PC-3 (cell line): ENCODE measurements at regions of chr14 and their contacts with region 1.

Region 1: DNA sequence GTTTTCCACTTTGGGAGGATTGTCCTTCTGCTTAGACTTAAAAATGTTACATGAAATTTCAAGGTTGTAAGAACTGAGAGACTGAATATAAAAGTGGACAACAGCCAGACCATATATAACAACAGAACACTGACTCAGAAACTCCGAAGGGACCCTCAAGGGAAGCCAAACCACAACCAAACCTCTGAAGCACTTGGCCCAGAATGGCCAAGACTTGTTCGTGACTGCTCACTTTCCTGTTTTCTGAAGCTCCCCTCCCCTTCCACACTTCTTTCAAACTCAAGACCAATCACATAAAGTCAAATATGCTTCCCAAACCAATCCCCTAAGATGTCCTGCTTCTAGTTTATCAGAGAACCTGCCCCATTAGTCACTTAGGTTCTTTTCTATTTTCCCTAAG is 13.7 kb downstream of the OR6J1 start:
- DNase-seq: no peak
- ATAC-seq: no peak
- H3K4me3 ChIP-seq: no peak overlapping the region
- H3K27ac ChIP-seq: no peak overlapping the region
- H3K4me1 ChIP-seq: no peaks in the 10 kb centered on the region
- H3K27me3 ChIP-seq: no peaks in the 10 kb centered on the region
- CTCF ChIP-seq: no peak

Region 2: DNA sequence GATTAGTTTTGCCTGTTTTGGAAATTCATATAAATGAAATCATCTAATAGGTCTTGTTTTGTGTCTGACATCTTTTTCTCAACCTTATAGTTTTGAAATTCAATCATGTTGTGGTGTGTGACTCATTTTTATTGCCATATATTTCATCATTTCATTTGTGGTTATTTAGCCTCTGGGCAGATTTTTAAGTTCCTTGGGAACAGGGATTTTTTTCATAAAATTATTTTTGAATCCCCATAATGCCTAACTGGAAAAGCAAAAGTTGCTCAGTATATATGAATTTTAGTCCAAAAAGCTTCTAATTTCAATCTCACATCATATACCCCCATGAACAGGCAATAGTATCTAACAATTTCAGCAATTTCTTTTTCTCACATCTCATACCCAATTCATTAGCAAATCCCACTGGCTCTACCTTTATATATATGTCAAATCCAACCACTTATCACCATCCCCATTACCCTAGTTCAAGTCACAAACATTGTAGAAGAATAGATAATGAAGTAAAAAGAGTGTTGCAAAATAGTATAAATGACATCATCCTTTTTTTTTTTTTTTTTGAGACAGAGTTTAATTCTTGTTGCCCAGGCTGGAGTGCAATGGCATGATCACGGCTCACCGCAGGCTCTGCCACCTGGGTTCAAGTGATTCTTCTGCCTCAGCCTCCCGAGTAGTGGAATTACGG is 16.2 kb after region 1 on chr14:
- CTCF ChIA-PET with region 1: no interaction called
- POLR2A ChIA-PET with region 1: interaction called, 10 read pairs
- intact Hi-C with region 1: no loop called
- DNase-seq: peak; percentile 91
- ATAC-seq: no peak
- H3K4me3 ChIP-seq: no peak overlapping the region
- H3K27ac ChIP-seq: peak overlapping the region; percentile 73
- H3K4me1 ChIP-seq: peaks cover 55% of the 10 kb centered on the region
- H3K27me3 ChIP-seq: no peaks in the 10 kb centered on the region
- CTCF ChIP-seq: no peak

Region 3: DNA sequence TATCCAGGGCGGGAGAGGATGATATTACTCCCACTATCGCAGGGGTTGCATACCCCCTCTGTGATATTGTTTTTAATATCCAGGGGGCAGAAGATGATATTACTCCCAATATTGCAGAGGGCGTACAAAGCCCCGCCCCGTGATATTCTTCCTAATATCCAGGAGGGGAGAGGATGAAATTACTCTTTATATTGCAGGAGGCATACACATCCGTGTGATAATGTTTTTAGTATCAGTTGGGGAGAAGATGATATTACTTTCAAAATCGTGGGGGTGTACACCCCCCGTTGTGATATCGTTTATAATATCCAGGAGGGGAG is 83.1 kb after region 1 on chr14:
- CTCF ChIA-PET with region 1: no interaction called
- POLR2A ChIA-PET with region 1: no interaction called
- intact Hi-C with region 1: no loop called
- DNase-seq: no peak
- ATAC-seq: peak; percentile 48
- H3K4me3 ChIP-seq: peak overlapping the region; percentile 85
- H3K27ac ChIP-seq: no peak overlapping the region
- H3K4me1 ChIP-seq: peaks cover 12% of the 10 kb centered on the region
- H3K27me3 ChIP-seq: peaks cover 22% of the 10 kb centered on the region; the same call in 1 of the 2 replicates
- CTCF ChIP-seq: no peak

Region 4: GRCh38 chr14:22726012-22726411 is 95.5 kb after region 1 on chr14:
- CTCF ChIA-PET with region 1: no interaction called
- POLR2A ChIA-PET with region 1: no interaction called
- intact Hi-C with region 1: no loop called
- DNase-seq: no peak
- ATAC-seq: no peak
- H3K4me3 ChIP-seq: no peak overlapping the region
- H3K27ac ChIP-seq: no peak overlapping the region
- H3K4me1 ChIP-seq: no peaks in the 10 kb centered on the region
- H3K27me3 ChIP-seq: 0 out of 2 replicates have a peak, but pooled peaks cover 3% of the 10 kb centered on the region
- CTCF ChIP-seq: no peak

Region 5: DNA sequence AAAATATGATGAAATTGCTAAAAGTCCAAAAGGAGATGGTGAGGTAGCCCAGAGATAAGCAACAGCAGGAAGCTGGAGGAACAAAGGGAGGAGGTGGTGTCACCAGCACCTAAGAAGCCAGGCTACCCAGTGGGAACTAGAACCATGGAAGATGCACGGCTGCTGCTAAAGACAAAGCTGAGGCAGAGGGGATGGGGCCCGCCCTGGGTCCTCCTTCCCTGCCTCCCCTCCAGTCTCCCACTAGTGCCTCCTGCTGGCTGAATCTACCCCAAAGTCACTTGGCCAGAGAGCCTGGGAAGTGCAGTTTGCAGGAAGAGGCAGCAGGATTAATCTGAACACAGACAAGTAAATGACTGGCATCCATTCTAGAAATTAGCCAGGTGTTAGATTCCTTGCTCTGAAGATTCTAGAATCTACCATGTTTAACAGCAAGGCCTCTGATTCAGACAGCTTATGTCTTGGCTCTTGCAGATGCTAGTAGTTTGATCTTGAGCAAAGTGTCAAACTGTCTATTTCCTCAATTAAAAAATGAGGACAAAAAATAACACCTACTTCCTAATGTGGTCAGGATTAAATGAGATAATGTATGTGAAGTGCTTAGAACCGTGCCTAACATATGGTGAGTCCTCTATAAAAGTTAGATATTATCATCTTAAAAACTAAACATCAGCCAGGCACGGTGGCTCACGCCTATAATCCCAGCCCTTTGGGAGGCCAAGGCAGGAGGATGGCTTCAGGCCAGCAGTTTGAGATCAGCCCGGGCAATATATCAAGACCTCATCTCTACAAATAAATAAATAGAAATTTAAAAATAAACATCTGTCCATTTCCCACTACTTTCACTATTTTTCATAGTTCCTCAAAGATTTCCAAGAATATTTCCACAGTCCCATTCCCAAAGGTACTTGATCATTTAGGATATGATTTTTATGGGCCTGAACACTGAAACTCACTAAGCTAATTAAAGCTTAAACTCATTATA is 235.2 kb after region 1 on chr14:
- CTCF ChIA-PET with region 1: no interaction called
- POLR2A ChIA-PET with region 1: interaction called, 17 read pairs
- intact Hi-C with region 1: no loop called
- DNase-seq: no peak
- ATAC-seq: no peak
- H3K4me3 ChIP-seq: no peak overlapping the region
- H3K27ac ChIP-seq: no peak overlapping the region
- H3K4me1 ChIP-seq: peaks cover 5% of the 10 kb centered on the region
- H3K27me3 ChIP-seq: no peaks in the 10 kb centered on the region
- CTCF ChIP-seq: peak; percentile 54